Heart left ventricle (tissue), 16 donors: ENCODE measurements at regions of chr10 and their contacts with region 1.

Region 1: GRCh38 chr10:122181055-122181732 is 89.9 kb upstream of the BTBD16 start:
- DNase-seq: no peak
- ATAC-seq: no peak
- H3K4me3 ChIP-seq: no peak overlapping the region
- H3K27ac ChIP-seq: no peak overlapping the region
- H3K4me1 ChIP-seq: peaks cover 3 to 48% (median 29%) of the 10 kb centered on the region in 12 donors
- H3K27me3 ChIP-seq: no peaks in the 10 kb centered on the region
- CTCF ChIP-seq: no peak
- POLR2A ChIP-seq: no peak

Region 2: GRCh38 chr10:122148876-122149560 is 32.2 kb before region 1 on chr10:
- intact Hi-C with region 1: loop called in 2 of 10 experiments (anchors 5 kb)
- DNase-seq: peak; percentile 81 to 91 (median 83)
- ATAC-seq: peak; percentile 18 to 68 (median 48)
- H3K4me3 ChIP-seq: peak overlapping the region in 5 of 12 donors; percentile 1 to 30 (median 25)
- H3K27ac ChIP-seq: peak overlapping the region; percentile 57 to 92 (median 82)
- H3K4me1 ChIP-seq: peaks cover 16 to 87% (median 65%) of the 10 kb centered on the region in 12 donors
- H3K27me3 ChIP-seq: no peaks in the 10 kb centered on the region
- CTCF ChIP-seq: no peak
- POLR2A ChIP-seq: no peak

Region 3: DNA sequence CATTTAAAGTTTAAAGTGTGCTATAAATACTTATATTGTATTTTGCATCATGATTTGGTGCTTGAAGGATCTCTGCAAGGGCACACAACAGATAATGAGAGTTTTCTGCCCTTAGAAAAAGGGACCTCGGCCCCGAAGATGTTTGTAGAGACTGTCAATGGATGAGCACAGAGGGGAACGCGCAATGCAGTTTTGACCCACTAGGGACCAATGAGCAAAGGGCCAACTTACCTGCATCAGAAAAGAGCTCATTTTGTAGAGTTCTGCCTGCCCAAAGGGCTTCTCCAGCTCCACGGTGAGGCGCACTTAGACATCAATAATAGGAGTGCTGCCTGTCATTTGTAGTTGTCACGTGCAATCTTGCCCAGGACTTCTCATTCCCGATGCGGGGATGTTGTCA is 1064.1 kb after region 1 on chr10:
- intact Hi-C with region 1: no loop called
- DNase-seq: no peak
- ATAC-seq: no peak
- H3K4me3 ChIP-seq: no peak overlapping the region
- H3K27ac ChIP-seq: no peak overlapping the region
- H3K4me1 ChIP-seq: no peaks in the 10 kb centered on the region
- H3K27me3 ChIP-seq: no peaks in the 10 kb centered on the region
- CTCF ChIP-seq: no peak
- POLR2A ChIP-seq: no peak